Activated CD8-positive, alpha-beta memory T cell treated with anti-CD3 and anti-CD28 coated beads, Interleukin-2, amount 10 ng/mL, durations not matched to agents 7 days and 5 days (primary cell): ENCODE measurements at regions of chr1 and their contacts with region 1.

Region 1: DNA sequence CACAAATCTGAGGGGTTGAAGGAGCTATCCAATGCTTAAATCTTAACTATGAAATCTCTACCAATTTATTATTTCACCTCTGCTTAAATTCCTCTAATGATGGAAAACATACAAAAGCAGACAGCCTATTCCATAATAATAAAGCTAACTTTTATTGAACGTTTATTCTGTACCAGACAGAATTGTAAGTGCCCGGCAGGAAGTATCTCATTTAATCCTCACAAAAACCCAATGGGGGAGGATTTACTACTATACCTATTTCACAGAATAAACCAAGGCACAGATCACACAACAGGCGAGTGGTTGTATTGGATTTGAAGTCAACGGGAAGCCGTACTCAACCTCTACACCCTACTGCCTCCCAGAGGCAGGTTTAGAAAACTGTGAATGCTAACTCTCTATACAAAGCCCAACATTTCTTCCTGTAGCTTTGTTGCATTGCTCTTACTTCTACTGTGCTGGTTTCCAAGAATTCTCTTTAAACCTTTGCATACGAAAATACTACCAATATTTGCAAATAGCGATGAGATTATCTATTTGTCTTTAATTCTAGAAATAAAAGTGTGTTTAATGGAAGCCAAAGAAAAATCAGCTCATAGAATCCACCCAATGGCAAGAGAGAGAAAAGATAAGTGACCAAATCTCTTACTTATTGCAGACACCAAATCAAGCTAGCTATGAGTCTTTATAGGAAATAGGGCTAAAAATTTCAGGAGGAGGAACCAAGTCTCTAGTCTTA is 33.5 kb upstream of the C1orf53 start:
- DNase-seq: peak; percentile 52
- ATAC-seq: peak; percentile 93
- H3K4me3 Mint-ChIP-seq: no peak overlapping the region
- H3K27ac Mint-ChIP-seq: no peak overlapping the region
- H3K4me1 Mint-ChIP-seq: peaks cover 1% of the 10 kb centered on the region
- H3K27me3 Mint-ChIP-seq: peaks cover 6% of the 10 kb centered on the region

Region 2: GRCh38 chr1:197521118-197521739 is 347.7 kb before region 1 on chr1:
- CTCF ChIA-PET with region 1: interaction called, 17 read pairs
- DNase-seq: no peak
- ATAC-seq: peak; percentile 36
- H3K4me3 Mint-ChIP-seq: no peak overlapping the region
- H3K27ac Mint-ChIP-seq: no peak overlapping the region
- H3K4me1 Mint-ChIP-seq: peaks cover 2% of the 10 kb centered on the region
- H3K27me3 Mint-ChIP-seq: no peaks in the 10 kb centered on the region

Region 3: GRCh38 chr1:197614916-197615692 is 253.8 kb before region 1 on chr1:
- CTCF ChIA-PET with region 1: interaction called, 23 read pairs
- DNase-seq: no peak
- ATAC-seq: peak; percentile 67
- H3K4me3 Mint-ChIP-seq: no peak overlapping the region
- H3K27ac Mint-ChIP-seq: no peak overlapping the region
- H3K4me1 Mint-ChIP-seq: no peaks in the 10 kb centered on the region
- H3K27me3 Mint-ChIP-seq: no peaks in the 10 kb centered on the region